CD4-positive, alpha-beta T cell (primary cell): ENCODE measurements at regions of chr17 and their contacts with region 1.

Region 1: DNA sequence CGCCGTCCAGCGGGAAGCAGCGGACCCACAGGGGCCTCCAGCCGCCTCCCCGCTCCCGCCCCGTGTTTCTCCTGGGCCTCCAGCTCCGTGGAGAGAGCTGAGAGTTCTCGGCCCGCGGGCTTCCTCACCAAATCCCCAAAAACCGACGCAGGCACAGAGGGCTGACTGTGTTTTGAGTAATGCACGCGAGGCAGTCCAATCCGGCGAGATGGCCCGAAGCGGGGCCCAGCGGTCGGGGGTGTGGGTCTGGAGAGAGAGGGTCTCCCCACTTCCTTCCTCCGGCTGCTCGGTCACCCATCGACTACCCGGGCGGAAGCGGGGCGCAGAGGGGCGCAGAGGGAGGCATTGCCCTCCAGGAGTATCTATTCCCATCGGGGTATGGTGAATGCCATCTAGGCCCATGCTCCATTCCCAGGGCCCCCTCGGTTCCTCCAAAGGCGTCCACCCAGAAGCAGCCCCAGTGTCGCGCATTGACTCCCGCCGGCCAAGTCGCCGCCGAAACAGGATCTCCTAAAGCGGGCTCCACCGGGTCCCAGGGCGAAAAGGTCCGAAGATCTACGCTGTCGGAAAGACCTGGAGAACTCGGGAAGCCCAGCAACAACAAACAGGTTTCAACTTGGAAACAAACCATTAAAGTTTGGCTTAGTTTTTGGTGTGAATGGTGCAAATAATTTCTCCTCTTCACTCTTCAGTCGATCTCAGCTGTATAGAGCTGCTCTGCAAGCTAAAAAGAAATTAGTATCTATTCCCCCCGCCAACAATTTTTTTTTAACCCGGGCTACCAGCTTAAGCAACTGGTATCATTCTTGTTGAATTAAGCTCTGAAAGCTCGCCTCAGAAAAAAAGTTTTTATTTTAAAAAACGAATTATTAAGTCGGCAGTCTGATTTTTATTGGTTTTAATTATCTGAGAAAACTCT is 19.2 kb upstream of the HOXB13 start:
- DNase-seq: no peak
- ATAC-seq: no peak
- H3K4me3 ChIP-seq: no peak overlapping the region
- H3K4me3 Mint-ChIP-seq: no peak overlapping the region
- H3K27ac ChIP-seq: no peak overlapping the region
- H3K27ac Mint-ChIP-seq: no peak overlapping the region
- H3K4me1 ChIP-seq: peaks cover 23% of the 10 kb centered on the region
- H3K4me1 Mint-ChIP-seq: peaks cover 16% of the 10 kb centered on the region
- H3K27me3 ChIP-seq: peaks cover 88 to 98% of the 10 kb centered on the region in 2 experiments
- H3K27me3 Mint-ChIP-seq: peaks cover 97% of the 10 kb centered on the region
- CTCF ChIP-seq: no peak

Region 2: DNA sequence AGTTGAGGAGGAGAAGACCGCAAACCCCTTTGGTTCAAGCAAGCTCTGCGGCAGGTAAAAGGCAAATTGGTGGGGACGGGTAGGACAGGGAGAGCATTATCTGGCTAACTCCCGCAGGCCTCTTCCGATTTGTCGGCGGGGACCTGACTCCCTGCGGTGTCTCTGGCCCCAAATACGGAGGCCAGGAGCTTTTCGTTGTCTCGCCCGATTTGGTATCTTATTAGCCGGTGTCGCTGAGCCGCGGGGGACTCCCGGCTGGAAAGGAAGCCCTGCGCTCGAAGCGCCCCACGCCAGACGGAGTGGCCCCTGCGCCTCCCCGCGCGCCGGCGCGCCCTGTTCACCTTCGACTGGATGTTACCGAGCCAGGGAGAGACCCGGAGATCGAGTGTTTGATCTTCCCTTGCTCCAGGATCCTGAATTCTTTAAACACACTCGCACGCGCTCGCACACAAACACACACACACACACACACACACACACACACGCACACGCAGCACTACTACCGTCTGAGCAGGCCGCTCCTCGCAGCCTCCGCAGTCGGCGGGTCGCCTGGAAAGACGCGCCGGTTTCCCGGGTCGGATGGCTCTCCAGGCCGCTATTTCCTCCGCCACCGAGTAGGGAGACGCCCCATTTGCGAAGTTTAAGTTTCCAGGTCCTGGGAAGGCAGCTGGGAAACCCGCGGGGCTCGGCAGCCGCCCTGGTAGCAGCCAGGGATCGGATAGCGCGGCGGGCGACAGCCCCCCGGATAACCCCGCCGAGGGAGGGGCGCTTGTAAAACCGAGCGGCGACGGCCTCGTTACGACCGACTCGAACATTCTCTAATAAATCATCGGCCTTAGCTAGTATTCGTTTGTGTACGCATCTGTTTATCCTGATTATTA is 28.7 kb before region 1 on chr17:
- CTCF ChIA-PET with region 1: interaction called, 6 read pairs
- POLR2A ChIA-PET with region 1: interaction called, 3 read pairs
- intact Hi-C with region 1: loop called in 1 of 2 experiments (anchors 2 kb)
- DNase-seq: peak in 3 of 14 experiments; percentile 37 to 43 (median 40)
- ATAC-seq: peak; percentile 40
- H3K4me3 ChIP-seq: no peak overlapping the region
- H3K4me3 Mint-ChIP-seq: peak overlapping the region; percentile 20
- H3K27ac ChIP-seq: no peak overlapping the region
- H3K27ac Mint-ChIP-seq: no peak overlapping the region
- H3K4me1 ChIP-seq: peaks cover 43% of the 10 kb centered on the region
- H3K4me1 Mint-ChIP-seq: peaks cover 38% of the 10 kb centered on the region
- H3K27me3 ChIP-seq: peaks cover 77 to 96% of the 10 kb centered on the region in 2 experiments
- H3K27me3 Mint-ChIP-seq: peaks cover 100% of the 10 kb centered on the region
- CTCF ChIP-seq: no peak